Dendritic cell treated with granulocyte-macrophage colony-stimulating factor and Interleukin-4, amounts not matched to agents 40 ng/mL and 50 ng/mL, for 4 days (primary cell): ENCODE measurements at regions of chr18 and their contacts with region 1.

Region 1: GRCh38 chr18:68721681-68722583 is 7.0 kb upstream of the TMX3 start:
- H3K4me3 Mint-ChIP-seq: peak overlapping the region; percentile 64
- H3K27ac Mint-ChIP-seq: peak overlapping the region; percentile 83
- H3K4me1 Mint-ChIP-seq: peaks cover 39% of the 10 kb centered on the region
- H3K27me3 Mint-ChIP-seq: no peaks in the 10 kb centered on the region

Region 2: GRCh38 chr18:67515945-67516538 is 1205.9 kb before region 1 on chr18:
- intact Hi-C with region 1: loop called (anchors 10 kb)
- H3K4me3 Mint-ChIP-seq: peak overlapping the region; percentile 92
- H3K27ac Mint-ChIP-seq: no peak overlapping the region
- H3K4me1 Mint-ChIP-seq: peaks cover 20% of the 10 kb centered on the region
- H3K27me3 Mint-ChIP-seq: peaks cover 64% of the 10 kb centered on the region

Region 3: DNA sequence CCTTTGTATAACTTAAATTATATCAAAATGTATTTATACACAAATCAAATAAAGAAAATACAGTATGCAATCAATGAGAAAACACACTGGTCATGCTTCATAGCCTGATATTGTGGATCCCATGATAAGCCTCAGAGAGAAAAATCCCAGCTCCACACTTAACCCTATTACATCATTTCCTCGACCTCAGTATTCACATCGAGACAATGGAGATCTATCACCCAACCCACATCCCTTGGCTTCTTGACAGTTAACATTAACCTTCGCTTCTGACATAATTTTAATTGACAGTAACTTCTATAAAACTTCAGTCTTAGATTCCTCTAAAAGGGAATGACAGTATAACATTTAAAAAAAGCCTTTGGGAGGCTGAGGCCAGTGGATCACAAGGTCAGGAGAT is 18.6 kb before region 1 on chr18:
- intact Hi-C with region 1: no loop called
- H3K4me3 Mint-ChIP-seq: no peak overlapping the region
- H3K27ac Mint-ChIP-seq: no peak overlapping the region
- H3K4me1 Mint-ChIP-seq: peaks cover 5% of the 10 kb centered on the region
- H3K27me3 Mint-ChIP-seq: no peaks in the 10 kb centered on the region

Region 4: GRCh38 chr18:68854786-68855391 is 133.0 kb after region 1 on chr18:
- intact Hi-C with region 1: no loop called
- H3K4me3 Mint-ChIP-seq: no peak overlapping the region
- H3K27ac Mint-ChIP-seq: no peak overlapping the region
- H3K4me1 Mint-ChIP-seq: no peaks in the 10 kb centered on the region
- H3K27me3 Mint-ChIP-seq: no peaks in the 10 kb centered on the region